ENCODE measurements at regions of chr15 and their contacts with region 1.

Region 1: DNA sequence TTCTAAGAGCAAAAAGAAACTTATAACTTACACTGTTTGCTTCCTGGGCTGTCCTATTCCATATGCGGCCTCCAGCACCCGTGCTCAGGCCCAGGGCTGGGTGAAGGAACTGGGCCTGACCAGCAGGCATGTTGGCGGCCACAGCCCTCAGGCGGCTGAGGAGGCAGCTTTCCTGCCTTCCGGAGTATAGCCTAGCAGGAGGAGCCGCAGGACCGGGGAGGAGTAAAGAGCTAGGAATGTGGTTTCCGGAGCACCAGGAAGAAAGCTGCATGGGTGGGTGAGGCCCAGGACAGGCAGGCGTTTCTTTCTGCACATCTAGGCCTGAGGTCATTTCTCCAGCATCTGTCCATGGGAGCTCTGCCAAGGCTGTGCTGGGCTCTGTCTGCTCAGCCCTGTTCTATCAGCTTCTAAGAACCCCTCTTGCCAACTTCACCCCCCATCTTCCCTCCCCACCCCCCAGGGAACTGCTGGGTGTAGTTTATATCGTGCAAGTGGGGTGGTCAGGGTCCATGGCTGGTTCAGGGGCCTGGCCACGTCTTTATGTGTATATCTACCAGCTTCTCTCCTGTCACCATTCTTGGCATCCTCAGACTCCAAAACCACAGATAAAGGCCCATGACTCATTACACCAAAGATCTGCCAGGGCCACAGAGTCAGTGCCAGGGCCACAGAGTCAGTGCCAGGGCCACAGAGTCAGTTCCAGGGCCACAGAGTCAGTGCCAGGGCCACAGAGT is 7.8 kb upstream of the KIF7 start:
- DNase-seq: no peak
- ATAC-seq: no peak
- H3K4me3 Mint-ChIP-seq: no peak overlapping the region
- H3K27ac Mint-ChIP-seq: no peak overlapping the region
- H3K4me1 Mint-ChIP-seq: peaks cover 2% of the 10 kb centered on the region
- H3K27me3 Mint-ChIP-seq: peaks cover 42% of the 10 kb centered on the region

Region 2: GRCh38 chr15:89587952-89588351 is 75.1 kb before region 1 on chr15:
- CTCF ChIA-PET with region 1: no interaction called
- POLR2A ChIA-PET with region 1: no interaction called
- DNase-seq: no peak
- ATAC-seq: no peak
- H3K4me3 Mint-ChIP-seq: no peak overlapping the region
- H3K27ac Mint-ChIP-seq: no peak overlapping the region
- H3K4me1 Mint-ChIP-seq: no peaks in the 10 kb centered on the region
- H3K27me3 Mint-ChIP-seq: no peaks in the 10 kb centered on the region

Region 3: DNA sequence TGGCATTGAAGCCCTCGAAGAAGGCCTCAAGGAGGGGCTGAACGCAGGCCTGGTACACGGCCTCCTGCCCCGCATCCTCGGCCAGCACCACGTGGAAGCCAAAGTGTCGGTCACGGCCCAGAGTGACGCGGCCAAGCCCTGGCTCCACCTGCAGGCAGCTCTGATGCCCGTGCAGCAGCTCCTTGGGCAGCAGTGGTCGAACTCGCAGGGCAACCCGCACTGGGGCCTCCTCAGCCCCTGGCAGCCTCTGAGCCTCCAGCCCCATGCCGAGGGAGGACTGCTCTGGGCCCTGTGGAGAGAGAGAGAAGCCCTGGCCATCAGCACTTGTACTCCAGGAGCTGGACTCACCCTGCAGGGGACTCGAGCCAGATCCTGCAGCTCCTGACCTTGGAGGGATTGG is 10.4 kb before region 1 on chr15:
- CTCF ChIA-PET with region 1: no interaction called
- POLR2A ChIA-PET with region 1: no interaction called
- DNase-seq: no peak
- ATAC-seq: no peak
- H3K4me3 Mint-ChIP-seq: no peak overlapping the region
- H3K27ac Mint-ChIP-seq: no peak overlapping the region
- H3K4me1 Mint-ChIP-seq: peaks cover 15% of the 10 kb centered on the region
- H3K27me3 Mint-ChIP-seq: peaks cover 38% of the 10 kb centered on the region

Region 4: GRCh38 chr15:89673165-89673512 is 10.1 kb after region 1 on chr15:
- CTCF ChIA-PET with region 1: interaction called, 17 read pairs
- POLR2A ChIA-PET with region 1: no interaction called
- DNase-seq: peak; percentile 52
- ATAC-seq: peak; percentile 69
- H3K4me3 Mint-ChIP-seq: no peak overlapping the region
- H3K27ac Mint-ChIP-seq: no peak overlapping the region
- H3K4me1 Mint-ChIP-seq: peaks cover 7% of the 10 kb centered on the region
- H3K27me3 Mint-ChIP-seq: no peaks in the 10 kb centered on the region

Region 5: GRCh38 chr15:89690276-89691218 is 27.5 kb after region 1 on chr15 and contains the starts of genes PEX11A and WDR93:
- CTCF ChIA-PET with region 1: no interaction called
- POLR2A ChIA-PET with region 1: no interaction called
- DNase-seq: peak; percentile 80
- ATAC-seq: peak; percentile 89
- H3K4me3 Mint-ChIP-seq: peak within 1 kb of the TSS; percentile 83
- H3K27ac Mint-ChIP-seq: peak within 1 kb of the TSS; percentile 76
- H3K4me1 Mint-ChIP-seq: peaks cover 18% of the 10 kb centered on the region
- H3K27me3 Mint-ChIP-seq: peaks cover 7% of the 10 kb centered on the region
- total RNA-seq, gene PEX11A: 1.4 to 1.8 TPM
- total RNA-seq, gene WDR93: not detected